HCT116 (cell line): ENCODE measurements at regions of chr15 and their contacts with region 1.

Region 1: DNA sequence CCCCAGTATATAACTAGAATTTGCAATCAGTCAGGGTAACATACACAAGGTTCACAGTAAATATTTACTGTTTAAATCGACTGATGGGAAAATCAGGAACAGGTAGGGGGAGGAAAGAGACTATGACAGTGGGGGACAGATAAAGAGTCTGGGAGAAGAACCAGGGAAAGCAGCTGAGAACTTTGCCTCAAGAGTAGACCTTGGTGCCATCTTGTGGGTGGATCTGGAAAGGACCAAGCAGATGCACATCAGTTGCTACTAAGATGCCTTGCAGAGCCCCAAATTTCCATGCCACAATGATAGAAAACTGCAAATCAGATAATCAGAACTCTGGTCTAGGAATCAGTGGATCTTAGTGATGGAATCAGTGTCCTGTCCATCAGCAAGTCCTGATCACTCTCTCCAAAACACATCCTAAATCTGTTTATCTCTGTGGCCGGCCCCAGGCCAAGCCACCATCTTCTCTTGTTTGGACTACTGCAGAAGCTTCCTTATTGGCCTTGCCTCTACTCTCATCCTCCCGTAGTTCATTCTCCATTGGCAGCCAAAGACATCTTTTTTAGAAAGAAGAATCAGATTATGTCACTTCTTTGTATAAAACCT is 62.7 kb downstream of the PDE8A start:
- DNase-seq: peak; percentile 28
- ATAC-seq: peak; percentile 93
- H3K4me3 ChIP-seq: no peak overlapping the region
- H3K27ac ChIP-seq: no peak overlapping the region
- H3K4me1 ChIP-seq: 0 out of 4 replicates have a peak, but pooled peaks cover 0 to 3% of the 10 kb centered on the region in 2 experiments
- H3K27me3 ChIP-seq: no peaks in the 10 kb centered on the region
- CTCF ChIP-seq: peak; percentile 49 to 61 (median 57); a peak in 5 of 6 replicates
- POLR2A ChIP-seq: no peak
- RAD21 ChIP-seq: peak; percentile 79

Region 2: DNA sequence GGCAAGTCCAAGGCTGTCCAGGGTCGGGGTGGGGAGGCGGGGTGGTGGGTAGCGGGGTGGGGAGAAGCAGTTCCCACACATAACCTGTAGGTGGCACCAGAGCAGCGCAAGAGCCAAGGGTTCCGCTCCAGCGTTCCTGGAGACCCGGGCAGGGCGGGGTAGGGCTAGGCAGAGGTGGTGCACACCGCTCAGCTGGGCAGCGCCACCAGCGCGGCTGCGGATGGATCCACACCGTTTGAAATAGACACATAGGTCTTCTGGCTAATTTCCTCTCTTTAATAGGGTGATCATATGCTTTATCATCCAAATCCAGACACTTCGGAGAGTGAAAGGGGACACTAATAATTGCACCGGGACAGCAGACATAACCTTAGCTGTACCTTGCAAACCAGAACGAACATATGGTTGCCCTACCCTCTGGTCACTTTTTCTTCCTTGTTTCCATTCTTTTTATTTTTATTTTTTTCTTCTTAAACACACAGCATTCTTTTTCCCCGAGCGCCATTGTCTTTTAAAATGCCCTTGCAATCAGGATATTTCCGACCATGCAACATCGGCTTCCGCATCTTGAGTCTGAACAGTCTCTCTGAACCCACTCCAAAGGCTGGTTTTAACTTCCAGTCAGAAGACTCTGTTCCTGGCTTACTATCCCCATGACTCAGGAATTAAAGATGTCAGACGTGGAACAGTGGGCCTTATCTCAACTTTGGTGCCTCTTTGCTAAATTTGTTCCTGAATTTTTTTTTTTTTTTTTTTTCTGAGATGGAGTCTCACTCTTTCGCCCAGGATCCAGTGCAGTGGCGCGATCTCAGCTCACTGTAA is 456.1 kb before region 1 on chr15:
- CTCF ChIA-PET with region 1: interaction called, 4 read pairs
- POLR2A ChIA-PET with region 1: no interaction called
- RAD21 ChIA-PET with region 1: no interaction called
- intact Hi-C with region 1: loop called (anchors 5 kb)
- DNase-seq: peak; percentile 85
- ATAC-seq: peak; percentile 99
- H3K4me3 ChIP-seq: peak overlapping the region; percentile 35 to 47
- H3K27ac ChIP-seq: no peak overlapping the region
- H3K4me1 ChIP-seq: peaks cover 0 to 11% of the 10 kb centered on the region in 2 experiments; a peak in 2 of 4 replicates
- H3K27me3 ChIP-seq: no peaks in the 10 kb centered on the region
- CTCF ChIP-seq: peak; percentile 62 to 72 (median 66)
- POLR2A ChIP-seq: no peak
- RAD21 ChIP-seq: peak; percentile 83

Region 3: GRCh38 chr15:84598969-84599368 is 445.4 kb before region 1 on chr15:
- CTCF ChIA-PET with region 1: interaction called, 4 read pairs
- POLR2A ChIA-PET with region 1: no interaction called
- RAD21 ChIA-PET with region 1: no interaction called
- intact Hi-C with region 1: loop called (anchors 5 kb)
- DNase-seq: peak; percentile 44
- ATAC-seq: peak; percentile 25; the same call in 1 of the 2 replicates
- H3K4me3 ChIP-seq: no peak overlapping the region
- H3K27ac ChIP-seq: no peak overlapping the region
- H3K4me1 ChIP-seq: peaks cover 2 to 11% of the 10 kb centered on the region in 2 experiments
- H3K27me3 ChIP-seq: no peaks in the 10 kb centered on the region
- CTCF ChIP-seq: peak; percentile 76 to 86 (median 76); a peak in 5 of 6 replicates
- POLR2A ChIP-seq: no peak
- RAD21 ChIP-seq: peak; percentile 88

Region 4: DNA sequence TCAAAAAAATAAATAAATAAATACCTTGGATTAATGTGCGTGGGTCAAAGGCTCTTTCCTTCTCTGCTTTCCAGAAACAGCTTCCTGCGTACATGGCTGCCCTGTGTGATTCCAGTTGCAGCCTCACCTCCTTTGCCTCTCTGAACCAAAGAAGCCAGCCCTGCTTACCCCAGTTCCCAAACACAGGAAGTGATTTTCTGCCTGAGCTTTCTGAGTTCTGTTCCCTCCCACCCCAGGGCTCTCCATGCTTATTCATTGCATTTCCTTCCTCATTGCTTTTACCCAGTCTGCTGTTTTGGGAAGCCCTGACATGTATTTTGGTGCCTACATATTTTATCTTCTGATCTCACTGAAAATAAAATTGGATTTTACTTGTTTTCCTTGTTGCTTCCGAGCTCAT is 428.1 kb before region 1 on chr15:
- CTCF ChIA-PET with region 1: no interaction called
- POLR2A ChIA-PET with region 1: no interaction called
- RAD21 ChIA-PET with region 1: no interaction called
- intact Hi-C with region 1: no loop called
- DNase-seq: no peak
- ATAC-seq: no peak
- H3K4me3 ChIP-seq: no peak overlapping the region
- H3K27ac ChIP-seq: no peak overlapping the region
- H3K4me1 ChIP-seq: no peaks in the 10 kb centered on the region; a peak in 1 of 4 replicates
- H3K27me3 ChIP-seq: no peaks in the 10 kb centered on the region
- CTCF ChIP-seq: no peak
- POLR2A ChIP-seq: no peak
- RAD21 ChIP-seq: no peak

Region 5: DNA sequence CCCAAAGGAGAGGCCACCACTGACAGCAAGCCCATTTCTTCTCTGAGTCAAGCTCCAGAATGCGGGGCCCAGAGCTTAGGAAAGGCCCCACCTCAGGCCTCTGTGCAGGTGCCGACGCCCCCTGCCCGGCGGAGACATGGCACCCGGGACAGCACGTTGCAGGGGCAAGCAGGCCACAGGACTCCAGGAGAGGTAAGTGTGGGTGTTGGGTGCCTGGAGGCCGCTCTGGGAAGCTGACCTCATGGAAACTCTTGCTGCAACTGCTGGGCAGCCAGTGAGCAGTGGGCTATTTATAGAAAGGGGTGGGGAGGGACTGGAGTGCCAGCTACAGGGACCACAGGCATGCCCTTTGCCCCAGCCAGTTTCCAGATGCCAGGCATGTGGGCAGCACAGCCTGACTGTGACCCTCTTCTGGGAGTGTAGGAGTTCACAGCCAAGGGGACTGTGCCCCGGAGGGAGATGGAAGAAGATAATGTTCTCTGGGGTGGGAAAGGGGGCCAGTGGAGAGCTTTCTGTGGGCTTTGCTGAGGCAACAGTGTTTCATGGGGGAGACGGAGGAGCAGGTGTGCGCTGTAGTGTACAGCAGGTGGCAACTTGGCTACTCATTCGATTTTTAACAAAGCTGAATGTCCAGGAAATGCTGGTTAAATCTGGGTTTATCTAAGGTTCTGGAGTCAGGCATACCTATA is 203.5 kb before region 1 on chr15:
- CTCF ChIA-PET with region 1: no interaction called
- POLR2A ChIA-PET with region 1: no interaction called
- RAD21 ChIA-PET with region 1: no interaction called
- intact Hi-C with region 1: loop called (anchors 10 kb)
- DNase-seq: peak; percentile 29
- ATAC-seq: peak; percentile 39; the same call in 1 of the 2 replicates
- H3K4me3 ChIP-seq: no peak overlapping the region
- H3K27ac ChIP-seq: peak overlapping the region; percentile 0; the same call in 1 of the 2 replicates
- H3K4me1 ChIP-seq: peaks cover 13 to 27% of the 10 kb centered on the region in 2 experiments
- H3K27me3 ChIP-seq: no peaks in the 10 kb centered on the region
- CTCF ChIP-seq: no peak
- POLR2A ChIP-seq: no peak
- RAD21 ChIP-seq: no peak

Region 6: GRCh38 chr15:84955089-84955848 is 89.1 kb before region 1 on chr15:
- CTCF ChIA-PET with region 1: interaction called, 7 read pairs
- POLR2A ChIA-PET with region 1: no interaction called
- RAD21 ChIA-PET with region 1: interaction called in 1 of 2 experiments, 5 read pairs
- intact Hi-C with region 1: loop called (anchors 1 kb)
- DNase-seq: peak; percentile 67
- ATAC-seq: peak; percentile 99
- H3K4me3 ChIP-seq: peak overlapping the region in 1 of 2 experiments; percentile 19; a peak in 2 of 4 replicates
- H3K27ac ChIP-seq: no peak overlapping the region; the same call in 1 of the 2 replicates
- H3K4me1 ChIP-seq: peaks cover 5 to 12% of the 10 kb centered on the region in 2 experiments; a peak in 3 of 4 replicates
- H3K27me3 ChIP-seq: no peaks in the 10 kb centered on the region
- CTCF ChIP-seq: peak; percentile 69 to 90 (median 82); a peak in 5 of 6 replicates
- POLR2A ChIP-seq: no peak
- RAD21 ChIP-seq: peak; percentile 90

Region 7: GRCh38 chr15:84981054-84981710 is 63.2 kb before region 1 on chr15:
- CTCF ChIA-PET with region 1: interaction called, 5 read pairs
- POLR2A ChIA-PET with region 1: no interaction called
- RAD21 ChIA-PET with region 1: no interaction called
- intact Hi-C with region 1: loop called (anchors 2 kb)
- DNase-seq: peak; percentile 92
- ATAC-seq: peak; percentile 81
- H3K4me3 ChIP-seq: peak overlapping the region; percentile 69 to 75
- H3K27ac ChIP-seq: peak overlapping the region; percentile 91
- H3K4me1 ChIP-seq: peaks cover 10 to 31% of the 10 kb centered on the region in 2 experiments; a peak in 3 of 4 replicates
- H3K27me3 ChIP-seq: no peaks in the 10 kb centered on the region
- CTCF ChIP-seq: no peak
- POLR2A ChIP-seq: peak; percentile 48
- RAD21 ChIP-seq: peak; percentile 20; the same call in 1 of the 2 replicates